ENCODE measurements at regions of chr21 and their contacts with region 1.

Region 1: DNA sequence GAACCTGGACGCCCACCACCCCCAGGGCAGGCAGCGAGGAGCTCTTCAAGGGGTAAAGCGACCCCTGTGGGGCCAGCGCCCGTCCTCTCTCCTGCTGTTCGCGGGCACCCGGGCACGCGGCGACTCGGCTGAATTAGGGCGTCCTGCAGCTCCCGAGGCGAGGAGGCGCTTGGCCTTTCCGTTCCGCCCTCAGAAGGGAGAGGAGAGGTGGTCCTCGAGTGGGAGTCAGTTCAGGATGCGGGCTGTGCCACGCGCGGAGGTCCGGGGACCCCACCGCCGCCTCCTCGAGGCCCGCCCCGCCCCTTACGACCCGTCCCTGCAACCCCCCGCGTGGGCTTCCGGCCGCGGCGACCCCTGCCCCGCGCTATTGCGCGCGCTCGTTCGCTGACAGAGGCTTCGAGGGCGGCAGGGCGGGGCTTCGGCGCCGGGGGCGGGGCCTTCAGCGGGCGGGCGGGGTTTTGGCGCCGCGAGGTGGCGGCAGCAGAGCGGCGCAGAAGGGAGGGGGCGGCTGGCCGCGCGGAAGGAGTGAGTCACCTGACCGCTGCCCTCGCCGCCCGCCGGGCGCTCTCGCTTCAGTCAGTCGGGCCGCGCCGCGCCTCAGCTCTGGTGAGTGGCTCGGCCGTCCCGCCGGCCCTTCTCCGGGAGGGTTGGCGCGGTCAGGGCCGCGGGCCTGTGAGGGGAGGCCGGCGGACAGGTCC is at the start of gene BACH1:
- DNase-seq: peak; percentile 89 to 92
- H3K4me3 ChIP-seq: peak within 1 kb of the TSS; percentile 88
- H3K4me3 Mint-ChIP-seq: peak within 1 kb of the TSS; percentile 98
- H3K27ac Mint-ChIP-seq: peak within 1 kb of the TSS; percentile 98
- H3K4me1 ChIP-seq: peaks cover 28% of the 10 kb centered on the region
- H3K4me1 Mint-ChIP-seq: peaks cover 11% of the 10 kb centered on the region
- H3K27me3 ChIP-seq: no peaks in the 10 kb centered on the region
- H3K27me3 Mint-ChIP-seq: no peaks in the 10 kb centered on the region
- CTCF ChIP-seq: peak in 1 of 2 experiments; percentile 33
- total RNA-seq, gene BACH1: 54.0 and 65.2 TPM in 2 replicates

Region 2: DNA sequence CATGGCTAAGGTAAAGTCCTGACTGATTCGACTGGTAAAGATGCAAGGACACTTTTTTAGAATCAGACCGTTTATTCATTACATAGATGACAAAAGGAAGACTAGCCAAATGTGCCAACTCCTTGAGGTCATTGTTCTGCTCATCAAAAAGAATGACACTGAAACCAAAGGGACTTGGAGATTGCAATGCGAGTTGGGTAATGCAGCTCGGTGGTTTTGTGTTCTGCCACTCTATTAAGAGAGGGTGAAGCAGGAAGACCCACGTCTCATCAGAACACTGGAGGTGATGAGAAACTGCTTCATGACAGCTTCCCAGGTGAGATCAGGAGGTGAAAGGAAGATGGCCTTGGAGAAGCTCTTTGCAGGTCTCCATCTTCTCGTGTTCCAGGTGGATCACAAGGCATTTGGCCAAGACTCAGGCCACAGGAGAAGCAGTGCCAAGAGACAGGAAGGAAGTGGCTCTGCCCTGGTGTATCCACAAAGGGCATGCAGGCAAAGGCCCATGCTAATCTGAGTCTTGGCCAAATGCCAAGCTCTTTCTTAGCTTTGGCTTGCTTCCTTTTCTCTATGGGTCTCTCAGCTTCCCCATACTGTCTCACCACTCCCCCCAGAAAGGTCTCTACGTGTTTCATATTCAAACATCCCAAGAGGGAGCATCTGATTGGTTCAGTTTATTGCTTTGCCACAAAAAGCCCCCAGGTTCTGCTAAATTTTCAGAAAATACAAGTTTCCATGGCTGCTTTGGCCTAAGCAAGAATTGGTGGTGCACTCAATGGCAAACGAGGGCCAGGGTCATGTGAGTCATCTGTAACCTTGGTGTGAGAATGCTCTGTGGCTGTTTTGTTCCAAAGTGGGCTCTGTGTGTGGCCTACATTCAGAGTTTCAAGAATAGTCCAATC is 219.4 kb before region 1 on chr21:
- CTCF ChIA-PET with region 1: no interaction called
- POLR2A ChIA-PET with region 1: interaction called, 4 read pairs
- intact Hi-C with region 1: loop called (anchors 5 kb)
- DNase-seq: no peak
- H3K4me3 ChIP-seq: no peak overlapping the region
- H3K4me3 Mint-ChIP-seq: peak overlapping the region; percentile 95
- H3K27ac Mint-ChIP-seq: no peak overlapping the region
- H3K4me1 ChIP-seq: peaks cover 5% of the 10 kb centered on the region; the same call in 1 of the 2 replicates
- H3K4me1 Mint-ChIP-seq: no peaks in the 10 kb centered on the region
- H3K27me3 ChIP-seq: no peaks in the 10 kb centered on the region
- H3K27me3 Mint-ChIP-seq: no peaks in the 10 kb centered on the region
- CTCF ChIP-seq: no peak

Region 3: DNA sequence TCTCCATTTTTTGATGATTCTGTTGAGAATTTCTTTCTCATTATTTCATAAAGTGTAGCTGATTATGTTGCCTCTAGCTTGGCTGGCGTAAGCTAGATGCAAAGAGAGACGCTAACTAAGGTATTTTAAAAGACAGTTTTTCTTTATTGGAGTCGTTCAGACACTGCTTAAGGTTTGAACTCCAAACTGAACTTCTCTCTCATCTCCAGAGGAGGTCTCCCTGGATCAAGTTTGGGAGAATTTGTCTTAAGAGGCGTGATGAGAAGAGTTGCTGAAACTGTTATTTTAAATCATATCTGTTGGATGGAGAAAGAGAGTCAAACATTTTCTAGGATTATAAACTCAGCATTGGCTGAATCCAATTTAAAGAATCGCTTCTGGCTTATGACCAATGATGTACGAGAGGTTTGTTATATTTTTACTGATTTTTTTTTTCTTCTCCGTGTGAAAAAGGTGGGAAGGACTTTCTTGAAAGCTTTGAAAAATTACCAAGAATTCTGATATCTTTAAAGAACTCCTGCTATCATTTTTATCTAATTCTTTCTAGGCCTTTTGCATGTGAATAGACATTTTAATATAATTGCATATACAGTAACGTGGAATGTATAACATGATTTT is 134.1 kb before region 1 on chr21:
- CTCF ChIA-PET with region 1: interaction called, 3 read pairs
- POLR2A ChIA-PET with region 1: no interaction called
- intact Hi-C with region 1: loop called (anchors 1 kb)
- DNase-seq: peak in 1 of 2 experiments; percentile 49
- H3K4me3 ChIP-seq: no peak overlapping the region
- H3K4me3 Mint-ChIP-seq: no peak overlapping the region
- H3K27ac Mint-ChIP-seq: no peak overlapping the region
- H3K4me1 ChIP-seq: no peaks in the 10 kb centered on the region
- H3K4me1 Mint-ChIP-seq: no peaks in the 10 kb centered on the region
- H3K27me3 ChIP-seq: no peaks in the 10 kb centered on the region
- H3K27me3 Mint-ChIP-seq: no peaks in the 10 kb centered on the region
- CTCF ChIP-seq: peak; percentile 64 to 65

Region 4: DNA sequence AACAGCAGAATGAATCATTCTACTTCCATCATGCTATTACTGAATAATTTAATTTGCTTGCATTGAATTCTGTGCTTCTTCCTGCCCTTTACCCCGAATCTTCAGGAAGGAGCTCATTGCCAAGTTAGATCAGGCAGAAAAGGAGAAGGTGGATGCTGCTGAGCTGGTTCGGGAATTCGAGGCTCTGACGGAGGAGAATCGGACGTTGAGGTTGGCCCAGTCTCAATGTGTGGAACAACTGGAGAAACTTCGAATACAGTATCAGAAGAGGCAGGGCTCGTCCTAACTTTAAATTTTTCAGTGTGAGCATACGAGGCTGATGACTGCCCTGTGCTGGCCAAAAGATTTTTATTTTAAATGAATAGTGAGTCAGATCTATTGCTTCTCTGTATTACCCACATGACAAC is 123.9 kb before region 1 on chr21:
- CTCF ChIA-PET with region 1: no interaction called
- POLR2A ChIA-PET with region 1: no interaction called
- intact Hi-C with region 1: no loop called
- DNase-seq: no peak
- H3K4me3 ChIP-seq: no peak overlapping the region
- H3K4me3 Mint-ChIP-seq: no peak overlapping the region
- H3K27ac Mint-ChIP-seq: no peak overlapping the region
- H3K4me1 ChIP-seq: peaks cover 34% of the 10 kb centered on the region
- H3K4me1 Mint-ChIP-seq: peaks cover 16% of the 10 kb centered on the region
- H3K27me3 ChIP-seq: no peaks in the 10 kb centered on the region
- H3K27me3 Mint-ChIP-seq: no peaks in the 10 kb centered on the region
- CTCF ChIP-seq: no peak

Region 5: GRCh38 chr21:29195981-29196669 is 102.4 kb before region 1 on chr21:
- CTCF ChIA-PET with region 1: interaction called, 5 read pairs
- POLR2A ChIA-PET with region 1: interaction called, 17 read pairs
- intact Hi-C with region 1: loop called (anchors 1 kb)
- DNase-seq: peak; percentile 71 to 74
- H3K4me3 ChIP-seq: no peak overlapping the region
- H3K4me3 Mint-ChIP-seq: peak overlapping the region; percentile 76
- H3K27ac Mint-ChIP-seq: peak overlapping the region; percentile 92
- H3K4me1 ChIP-seq: peaks cover 49% of the 10 kb centered on the region
- H3K4me1 Mint-ChIP-seq: peaks cover 36% of the 10 kb centered on the region
- H3K27me3 ChIP-seq: no peaks in the 10 kb centered on the region
- H3K27me3 Mint-ChIP-seq: no peaks in the 10 kb centered on the region
- CTCF ChIP-seq: peak; percentile 23 to 31

Region 6: GRCh38 chr21:29258626-29259335 is 39.7 kb before region 1 on chr21:
- CTCF ChIA-PET with region 1: no interaction called
- POLR2A ChIA-PET with region 1: no interaction called
- intact Hi-C with region 1: loop called (anchors 5 kb)
- DNase-seq: peak; percentile 31 to 40
- H3K4me3 ChIP-seq: no peak overlapping the region
- H3K4me3 Mint-ChIP-seq: no peak overlapping the region
- H3K27ac Mint-ChIP-seq: no peak overlapping the region
- H3K4me1 ChIP-seq: peaks cover 14% of the 10 kb centered on the region
- H3K4me1 Mint-ChIP-seq: peaks cover 20% of the 10 kb centered on the region
- H3K27me3 ChIP-seq: no peaks in the 10 kb centered on the region
- H3K27me3 Mint-ChIP-seq: no peaks in the 10 kb centered on the region
- CTCF ChIP-seq: no peak

Region 7: DNA sequence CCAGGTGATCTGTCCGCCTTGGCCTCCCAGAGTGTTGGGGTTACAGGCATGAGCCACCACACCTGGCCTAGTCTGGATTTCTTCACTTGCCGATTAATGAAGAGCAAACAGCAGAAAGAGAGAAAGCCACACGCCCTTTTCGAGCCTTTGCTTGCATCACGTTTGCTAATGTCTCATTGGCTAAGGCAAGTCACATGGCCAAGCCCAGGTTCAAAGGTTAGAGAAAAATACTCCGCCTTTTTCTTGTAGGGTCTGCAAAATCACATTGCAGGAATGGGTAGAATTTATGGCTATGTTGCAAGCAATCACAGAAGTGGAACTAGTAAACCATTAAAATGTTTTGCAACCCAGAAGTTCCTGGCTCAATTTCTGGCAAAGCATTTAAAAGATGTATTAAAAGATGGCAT is 26.6 kb before region 1 on chr21:
- CTCF ChIA-PET with region 1: interaction called, 4 read pairs
- POLR2A ChIA-PET with region 1: no interaction called
- intact Hi-C with region 1: loop called (anchors 1 kb)
- DNase-seq: peak; percentile 82 to 90
- H3K4me3 ChIP-seq: no peak overlapping the region
- H3K4me3 Mint-ChIP-seq: no peak overlapping the region
- H3K27ac Mint-ChIP-seq: peak overlapping the region; percentile 69
- H3K4me1 ChIP-seq: peaks cover 11% of the 10 kb centered on the region; the same call in 1 of the 2 replicates
- H3K4me1 Mint-ChIP-seq: peaks cover 22% of the 10 kb centered on the region
- H3K27me3 ChIP-seq: no peaks in the 10 kb centered on the region
- H3K27me3 Mint-ChIP-seq: no peaks in the 10 kb centered on the region
- CTCF ChIP-seq: no peak

Region 8: GRCh38 chr21:29349702-29350101 is 51.2 kb after region 1 on chr21:
- CTCF ChIA-PET with region 1: interaction called, 7 read pairs
- POLR2A ChIA-PET with region 1: no interaction called
- intact Hi-C with region 1: loop called (anchors 2 kb)
- DNase-seq: no peak
- H3K4me3 ChIP-seq: no peak overlapping the region
- H3K4me3 Mint-ChIP-seq: no peak overlapping the region
- H3K27ac Mint-ChIP-seq: no peak overlapping the region
- H3K4me1 ChIP-seq: peaks cover 19% of the 10 kb centered on the region
- H3K4me1 Mint-ChIP-seq: peaks cover 32% of the 10 kb centered on the region
- H3K27me3 ChIP-seq: no peaks in the 10 kb centered on the region
- H3K27me3 Mint-ChIP-seq: no peaks in the 10 kb centered on the region
- CTCF ChIP-seq: no peak